OCI-LY7 (cell line): ENCODE measurements at regions of chr18 and their contacts with region 1.

Region 1: GRCh38 chr18:50878345-50879301 is at the start of gene ME2:
- DNase-seq: peak; percentile 84
- H3K4me3 ChIP-seq: peak within 1 kb of the TSS; percentile 89
- H3K27ac ChIP-seq: peak within 1 kb of the TSS; percentile 76
- H3K4me1 ChIP-seq: peaks cover 12% of the 10 kb centered on the region
- CTCF ChIP-seq: no peak
- total RNA-seq, gene ME2: 39.0 and 43.2 TPM in 2 replicates

Region 2: DNA sequence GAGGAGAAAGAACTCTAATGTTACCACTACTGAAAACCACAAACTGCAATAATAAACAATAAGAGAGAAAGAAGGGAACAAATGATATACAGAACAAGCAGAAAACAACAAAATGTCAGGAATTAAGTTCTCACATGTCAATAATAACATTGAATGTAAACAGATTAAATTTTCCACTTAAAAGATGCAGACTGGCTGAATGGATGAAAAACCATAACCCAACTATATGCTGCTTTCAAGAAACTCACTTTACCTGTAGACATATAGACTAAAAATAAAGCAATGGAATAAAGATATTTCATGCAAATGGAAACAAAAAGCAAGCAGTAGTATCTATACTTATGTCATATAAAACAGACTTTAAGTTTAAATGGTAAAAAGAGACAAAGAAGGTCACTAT is 109.2 kb before region 1 on chr18:
- CTCF ChIA-PET with region 1: no interaction called
- POLR2A ChIA-PET with region 1: no interaction called
- intact Hi-C with region 1: no loop called
- DNase-seq: no peak
- H3K4me3 ChIP-seq: no peak overlapping the region
- H3K27ac ChIP-seq: no peak overlapping the region
- H3K4me1 ChIP-seq: no peaks in the 10 kb centered on the region
- CTCF ChIP-seq: no peak

Region 3: DNA sequence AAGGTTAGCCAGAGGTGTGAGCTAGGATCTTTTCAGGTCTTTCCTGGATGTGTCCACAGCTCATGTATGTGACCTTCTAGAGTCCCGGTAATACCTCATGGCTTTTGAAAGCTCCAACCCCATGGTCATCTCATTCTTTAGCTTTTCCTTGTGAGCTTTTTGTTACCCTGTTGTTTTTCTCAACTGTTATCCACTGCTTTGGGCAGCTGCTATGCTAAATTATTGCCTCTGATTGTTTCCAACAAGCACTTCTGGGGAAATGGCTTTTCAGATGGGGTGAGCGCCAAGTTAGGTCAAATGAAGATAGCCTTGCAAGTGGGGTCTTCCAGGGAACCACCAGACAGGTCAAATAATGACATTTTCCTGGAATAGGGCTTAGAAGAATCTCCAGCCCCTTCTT is 28.2 kb after region 1 on chr18:
- CTCF ChIA-PET with region 1: no interaction called
- POLR2A ChIA-PET with region 1: no interaction called
- intact Hi-C with region 1: no loop called
- DNase-seq: no peak
- H3K4me3 ChIP-seq: no peak overlapping the region
- H3K27ac ChIP-seq: no peak overlapping the region
- H3K4me1 ChIP-seq: no peaks in the 10 kb centered on the region
- CTCF ChIP-seq: no peak

Region 4: GRCh38 chr18:50967714-50968661 is 89.4 kb after region 1 on chr18 and contains the start of gene ELAC1:
- CTCF ChIA-PET with region 1: no interaction called
- POLR2A ChIA-PET with region 1: interaction called, 4 read pairs
- intact Hi-C with region 1: loop called (anchors 5 kb)
- DNase-seq: peak; percentile 77
- H3K4me3 ChIP-seq: peak within 1 kb of the TSS; percentile 85
- H3K27ac ChIP-seq: peak within 1 kb of the TSS; percentile 44
- H3K4me1 ChIP-seq: peaks cover 6% of the 10 kb centered on the region
- CTCF ChIP-seq: no peak
- total RNA-seq, gene ELAC1: 1.5 and 2.9 TPM in 2 replicates

Region 5: GRCh38 chr18:51029694-51030536 is 151.3 kb after region 1 on chr18 and contains the start of gene SMAD4:
- CTCF ChIA-PET with region 1: no interaction called
- POLR2A ChIA-PET with region 1: interaction called, 5 read pairs
- intact Hi-C with region 1: loop called (anchors 2 kb)
- DNase-seq: peak; percentile 85
- H3K4me3 ChIP-seq: peak within 1 kb of the TSS; percentile 87
- H3K27ac ChIP-seq: peak within 1 kb of the TSS; percentile 57
- H3K4me1 ChIP-seq: peaks cover 14% of the 10 kb centered on the region
- CTCF ChIP-seq: no peak
- total RNA-seq, gene SMAD4: 28.1 and 44.7 TPM in 2 replicates

Region 6: DNA sequence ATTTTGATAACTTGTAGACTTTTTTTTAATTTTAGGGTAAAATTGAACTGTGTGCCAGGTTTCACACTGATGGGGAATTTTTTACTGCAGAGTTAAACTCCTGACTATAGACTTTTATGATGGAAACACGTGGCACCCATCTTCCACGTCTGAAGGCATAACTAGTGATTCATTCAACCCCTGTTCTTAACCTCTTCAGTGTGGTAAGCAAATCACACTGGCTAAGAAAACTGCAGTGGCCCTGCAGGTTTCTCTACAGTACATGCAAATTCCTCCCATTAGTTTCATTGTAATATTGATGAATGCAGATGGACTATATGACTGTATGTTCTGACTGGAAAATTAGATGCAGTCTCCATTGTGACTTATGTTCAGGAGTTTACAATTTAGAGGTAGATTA is 198.6 kb after region 1 on chr18:
- CTCF ChIA-PET with region 1: no interaction called
- POLR2A ChIA-PET with region 1: no interaction called
- intact Hi-C with region 1: no loop called
- DNase-seq: no peak
- H3K4me3 ChIP-seq: no peak overlapping the region
- H3K27ac ChIP-seq: no peak overlapping the region
- H3K4me1 ChIP-seq: peaks cover 15% of the 10 kb centered on the region
- CTCF ChIP-seq: no peak